Prostate gland (tissue), 2 donors: ENCODE measurements at regions of chr12 and their contacts with region 1.

Region 1: GRCh38 chr12:121697098-121697698 is 15.4 kb upstream of the TMEM120B start:
- DNase-seq: peak; percentile 46
- H3K4me3 ChIP-seq: no peak overlapping the region
- H3K27ac ChIP-seq: no peak overlapping the region
- H3K4me1 ChIP-seq: no peaks in the 10 kb centered on the region
- H3K27me3 ChIP-seq: no peaks in the 10 kb centered on the region
- CTCF ChIP-seq: peak; percentile 28 to 89 (median 74)
- POLR2A ChIP-seq: no peak

Region 2: DNA sequence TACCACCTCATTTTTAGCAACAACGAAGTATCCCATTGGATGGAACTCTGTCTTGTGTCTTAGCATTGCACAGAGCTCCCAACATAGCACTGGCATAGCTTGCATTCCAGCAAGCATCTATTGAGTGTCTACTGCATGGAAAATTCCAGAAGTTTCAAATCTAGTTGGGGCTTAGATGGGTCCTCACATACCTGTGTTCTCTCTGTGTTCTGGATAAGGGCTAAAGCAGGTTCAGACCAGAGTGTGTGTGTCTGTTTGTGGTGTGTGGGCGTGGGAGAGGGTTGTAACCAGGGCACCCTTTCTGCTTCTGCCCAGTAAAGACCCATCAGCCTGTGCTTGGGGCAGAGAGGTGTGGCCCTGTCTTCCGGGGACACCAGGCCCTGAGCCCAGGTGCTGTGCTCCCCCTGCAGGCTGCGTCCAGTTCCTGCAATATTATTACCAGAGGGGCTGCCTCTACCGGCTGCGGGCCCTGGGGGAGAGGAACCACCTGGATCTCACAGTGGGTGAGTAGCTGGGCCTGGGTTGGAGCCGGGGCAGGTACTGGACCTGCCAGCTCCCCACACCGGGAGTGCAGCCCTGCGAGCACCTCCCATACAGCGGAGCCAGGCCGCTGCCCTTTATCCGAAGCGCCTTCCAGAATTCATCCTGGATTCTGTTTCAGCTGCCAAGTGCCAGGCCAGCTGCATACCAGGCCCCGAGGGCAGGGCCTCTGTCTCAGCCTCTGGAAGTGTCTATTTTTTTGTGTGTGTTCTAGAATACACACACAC is 76.0 kb after region 1 on chr12:
- intact Hi-C with region 1: loop called (anchors 2 kb)
- DNase-seq: peak; percentile 60
- H3K4me3 ChIP-seq: no peak overlapping the region
- H3K27ac ChIP-seq: peak overlapping the region; percentile 31 to 47
- H3K4me1 ChIP-seq: no peaks in the 10 kb centered on the region
- H3K27me3 ChIP-seq: no peaks in the 10 kb centered on the region
- CTCF ChIP-seq: peak; percentile 67 to 93 (median 90)
- POLR2A ChIP-seq: no peak

Region 3: GRCh38 chr12:121793838-121794533 is 96.8 kb after region 1 on chr12:
- intact Hi-C with region 1: loop called (anchors 5 kb)
- DNase-seq: peak; percentile 88
- H3K4me3 ChIP-seq: peak overlapping the region; percentile 42 to 46
- H3K27ac ChIP-seq: peak overlapping the region; percentile 98 to 100
- H3K4me1 ChIP-seq: peaks cover 41% of the 10 kb centered on the region
- H3K27me3 ChIP-seq: no peaks in the 10 kb centered on the region
- CTCF ChIP-seq: peak; percentile 98 to 100 (median 100)
- POLR2A ChIP-seq: peak; percentile 37

Region 4: GRCh38 chr12:121888478-121889266 is 191.5 kb after region 1 on chr12 and contains the start of gene PSMD9:
- intact Hi-C with region 1: loop called (anchors 5 kb)
- DNase-seq: peak; percentile 95
- H3K4me3 ChIP-seq: peak within 1 kb of the TSS; percentile 68 to 82
- H3K27ac ChIP-seq: peak within 1 kb of the TSS; percentile 94 to 95
- H3K4me1 ChIP-seq: peaks cover 11% of the 10 kb centered on the region
- H3K27me3 ChIP-seq: no peaks in the 10 kb centered on the region
- CTCF ChIP-seq: peak; percentile 43 to 78 (median 59)
- POLR2A ChIP-seq: peak; percentile 75
- total RNA-seq, gene PSMD9: 68.2 to 73.3 TPM

Region 5: GRCh38 chr12:122215771-122216170 is 518.6 kb after region 1 on chr12:
- intact Hi-C with region 1: no loop called
- DNase-seq: no peak
- H3K4me3 ChIP-seq: no peak overlapping the region
- H3K27ac ChIP-seq: no peak overlapping the region
- H3K4me1 ChIP-seq: no peaks in the 10 kb centered on the region
- H3K27me3 ChIP-seq: no peaks in the 10 kb centered on the region
- CTCF ChIP-seq: no peak
- POLR2A ChIP-seq: no peak